CD4-positive, alpha-beta T cell (primary cell): ENCODE measurements at regions of chr3 and their contacts with region 1.

Region 1: DNA sequence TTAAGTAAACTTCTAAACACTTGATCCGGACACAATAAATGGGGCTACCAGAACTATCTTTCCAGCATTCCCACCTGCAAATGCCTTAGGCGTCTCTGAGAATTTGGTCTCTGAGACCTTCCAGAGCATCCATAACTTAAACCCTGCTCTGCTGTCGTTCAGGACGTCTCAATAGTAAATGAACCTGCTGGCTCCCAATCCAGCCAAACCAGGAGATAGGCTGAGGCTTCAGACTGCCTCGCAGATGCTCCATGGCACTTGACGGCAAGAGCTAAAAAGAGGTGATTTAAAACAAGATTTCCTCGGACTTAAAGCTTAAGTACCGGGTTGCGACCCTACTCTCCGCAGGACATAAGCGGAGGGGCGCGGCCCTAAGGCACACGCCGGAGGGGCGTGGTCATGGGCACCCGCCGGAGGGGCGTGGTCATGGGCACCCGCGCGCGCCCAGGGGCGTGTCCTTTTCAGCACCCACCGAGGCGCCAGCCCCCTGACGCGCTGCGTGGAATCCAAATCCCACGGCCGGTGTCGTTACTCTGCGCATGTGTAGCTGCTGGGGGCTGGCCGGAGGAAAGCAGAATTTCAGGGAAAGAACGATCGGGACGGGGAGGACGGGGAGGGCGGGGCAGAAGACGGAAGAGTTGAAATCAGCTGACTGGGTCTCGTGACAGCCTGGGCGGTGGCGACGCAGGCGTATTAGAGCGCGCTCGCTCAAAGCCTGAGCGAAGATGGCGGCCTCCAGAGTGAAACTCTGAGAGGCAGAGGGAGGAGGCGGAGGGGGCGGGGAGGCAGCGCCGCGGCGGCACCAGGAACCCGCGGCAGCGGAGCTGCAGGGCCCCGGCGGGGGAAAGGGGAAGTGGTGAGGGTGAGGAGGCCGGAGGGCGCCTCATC is at the start of gene DNAJC13:
- DNase-seq: peak; percentile 81 to 98 (median 89)
- ATAC-seq: peak; percentile 93
- H3K4me3 ChIP-seq: peak within 1 kb of the TSS; percentile 91
- H3K4me3 Mint-ChIP-seq: peak within 1 kb of the TSS; percentile 97
- H3K27ac ChIP-seq: peak within 1 kb of the TSS; percentile 76 to 81
- H3K27ac Mint-ChIP-seq: peak within 1 kb of the TSS; percentile 91
- H3K4me1 ChIP-seq: peaks cover 12% of the 10 kb centered on the region
- H3K4me1 Mint-ChIP-seq: peaks cover 34% of the 10 kb centered on the region
- H3K27me3 ChIP-seq: no peaks in the 10 kb centered on the region
- H3K27me3 Mint-ChIP-seq: no peaks in the 10 kb centered on the region
- CTCF ChIP-seq: no peak
- total RNA-seq, gene DNAJC13: 13.5 to 14.3 TPM

Region 2: GRCh38 chr3:131026321-131027178 is 1390.5 kb before region 1 on chr3 and contains the starts of genes ASTE1 and NEK11:
- CTCF ChIA-PET with region 1: no interaction called
- POLR2A ChIA-PET with region 1: interaction called, 3 read pairs
- intact Hi-C with region 1: loop called in 1 of 2 experiments (anchors 5 kb)
- DNase-seq: peak; percentile 85 to 96 (median 90)
- ATAC-seq: peak; percentile 97
- H3K4me3 ChIP-seq: peak within 1 kb of the TSS; percentile 66
- H3K4me3 Mint-ChIP-seq: peak within 1 kb of the TSS; percentile 93
- H3K27ac ChIP-seq: peak within 1 kb of the TSS; percentile 84 to 89
- H3K27ac Mint-ChIP-seq: peak within 1 kb of the TSS; percentile 94
- H3K4me1 ChIP-seq: peaks cover 30% of the 10 kb centered on the region
- H3K4me1 Mint-ChIP-seq: peaks cover 52% of the 10 kb centered on the region
- H3K27me3 ChIP-seq: no peaks in the 10 kb centered on the region
- H3K27me3 Mint-ChIP-seq: no peaks in the 10 kb centered on the region
- CTCF ChIP-seq: no peak
- total RNA-seq, gene ASTE1: 25.6 to 26.6 TPM
- total RNA-seq, gene NEK11: 1.6 to 4.2 TPM

Region 3: GRCh38 chr3:131231710-131232389 is 1185.2 kb before region 1 on chr3:
- CTCF ChIA-PET with region 1: no interaction called
- POLR2A ChIA-PET with region 1: no interaction called
- intact Hi-C with region 1: no loop called
- DNase-seq: no peak
- ATAC-seq: no peak
- H3K4me3 ChIP-seq: no peak overlapping the region
- H3K4me3 Mint-ChIP-seq: no peak overlapping the region
- H3K27ac ChIP-seq: no peak overlapping the region
- H3K27ac Mint-ChIP-seq: no peak overlapping the region
- H3K4me1 ChIP-seq: no peaks in the 10 kb centered on the region
- H3K4me1 Mint-ChIP-seq: no peaks in the 10 kb centered on the region
- H3K27me3 ChIP-seq: no peaks in the 10 kb centered on the region
- H3K27me3 Mint-ChIP-seq: no peaks in the 10 kb centered on the region
- CTCF ChIP-seq: no peak

Region 4: DNA sequence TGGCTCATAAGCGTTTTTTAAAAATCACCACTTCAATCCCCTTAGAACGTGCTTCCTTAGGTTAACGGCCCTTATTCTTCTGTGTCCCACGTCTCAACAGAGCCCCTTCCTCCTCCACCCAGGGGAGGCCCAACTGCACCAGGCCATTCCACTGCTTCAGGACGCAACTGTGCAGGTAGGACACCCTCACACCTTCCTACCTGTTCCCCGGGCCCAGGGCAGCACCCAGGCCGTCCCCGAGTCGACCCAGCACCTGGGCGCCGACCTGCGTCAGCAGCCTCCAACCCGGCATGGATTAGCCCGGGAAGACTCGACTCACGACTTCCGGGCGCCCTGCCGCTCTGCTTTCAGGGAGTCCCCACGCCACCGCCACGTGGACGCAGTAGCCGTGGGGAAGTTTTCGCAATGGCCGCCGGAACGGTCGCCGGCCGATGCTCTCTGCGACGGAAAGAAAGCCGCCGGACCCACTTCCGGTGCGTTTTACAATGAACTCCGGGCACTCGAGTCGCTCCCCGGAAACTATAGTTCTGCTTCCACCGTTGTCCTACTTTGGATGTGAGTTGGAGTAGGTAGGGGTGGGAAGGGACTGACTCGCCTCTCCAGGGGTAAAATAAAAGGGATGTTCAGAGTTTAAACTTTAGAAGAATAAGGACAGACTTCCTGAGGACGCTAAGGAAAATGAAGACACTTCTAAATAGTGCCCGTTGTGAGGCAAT is 914.4 kb before region 1 on chr3 and contains the start of gene MRPL3:
- CTCF ChIA-PET with region 1: no interaction called
- POLR2A ChIA-PET with region 1: no interaction called
- intact Hi-C with region 1: loop called in 1 of 2 experiments (anchors 10 kb)
- DNase-seq: peak; percentile 72 to 93 (median 78)
- ATAC-seq: peak; percentile 89
- H3K4me3 ChIP-seq: peak within 1 kb of the TSS; percentile 71
- H3K4me3 Mint-ChIP-seq: peak within 1 kb of the TSS; percentile 98
- H3K27ac ChIP-seq: peak within 1 kb of the TSS; percentile 66 to 76
- H3K27ac Mint-ChIP-seq: peak within 1 kb of the TSS; percentile 93
- H3K4me1 ChIP-seq: peaks cover 16% of the 10 kb centered on the region
- H3K4me1 Mint-ChIP-seq: peaks cover 54% of the 10 kb centered on the region
- H3K27me3 ChIP-seq: no peaks in the 10 kb centered on the region
- H3K27me3 Mint-ChIP-seq: no peaks in the 10 kb centered on the region
- CTCF ChIP-seq: no peak
- total RNA-seq, gene MRPL3: 36.0 to 37.6 TPM

Region 5: DNA sequence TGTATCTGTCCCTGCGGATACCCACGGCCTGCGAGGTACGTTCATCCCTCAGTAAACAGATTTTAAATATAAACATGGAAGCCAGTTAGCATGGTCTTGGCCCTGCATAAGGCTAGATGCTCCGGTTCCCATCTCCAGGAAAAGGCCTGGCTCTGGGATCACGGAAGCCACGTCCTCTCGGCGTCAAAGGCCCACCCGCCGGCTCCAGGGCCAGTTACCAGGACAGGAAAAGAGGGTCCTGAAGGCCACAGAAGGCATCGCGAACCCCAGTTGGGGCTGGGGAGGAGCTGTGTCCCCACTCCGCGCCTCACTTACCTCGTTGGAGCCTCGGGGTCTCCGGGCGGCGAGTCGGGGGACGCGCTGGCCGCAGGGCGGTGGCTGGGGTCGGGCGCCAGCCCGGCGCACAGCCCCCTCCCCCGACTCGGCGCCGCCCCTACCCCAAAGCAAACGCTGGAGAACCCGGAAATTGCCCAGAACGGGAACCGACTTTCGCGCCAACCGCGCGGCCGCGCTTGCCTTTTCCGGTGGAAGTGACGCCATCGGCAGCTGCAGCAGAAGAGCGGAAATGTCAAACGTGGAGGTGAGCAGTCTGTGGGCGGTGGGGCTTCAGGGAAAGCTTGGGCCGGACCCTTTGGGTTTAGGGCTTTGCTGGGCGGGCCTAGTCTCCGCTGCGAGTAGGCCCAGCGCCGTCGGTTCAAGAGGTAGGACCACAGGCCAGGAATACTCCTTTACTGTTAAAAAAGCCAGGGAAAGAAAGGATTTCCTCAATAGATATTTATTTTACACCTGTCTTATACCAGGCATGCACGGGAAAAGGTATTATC is 1244.6 kb after region 1 on chr3 and contains the start of gene TOPBP1:
- CTCF ChIA-PET with region 1: no interaction called
- POLR2A ChIA-PET with region 1: no interaction called
- intact Hi-C with region 1: loop called in 1 of 2 experiments (anchors 10 kb)
- DNase-seq: peak; percentile 70 to 92 (median 81)
- ATAC-seq: peak; percentile 85
- H3K4me3 ChIP-seq: peak within 1 kb of the TSS; percentile 72
- H3K4me3 Mint-ChIP-seq: peak within 1 kb of the TSS; percentile 97
- H3K27ac ChIP-seq: peak within 1 kb of the TSS; percentile 58 to 73
- H3K27ac Mint-ChIP-seq: peak within 1 kb of the TSS; percentile 95
- H3K4me1 ChIP-seq: peaks cover 26% of the 10 kb centered on the region
- H3K4me1 Mint-ChIP-seq: peaks cover 45% of the 10 kb centered on the region
- H3K27me3 ChIP-seq: no peaks in the 10 kb centered on the region
- H3K27me3 Mint-ChIP-seq: no peaks in the 10 kb centered on the region
- CTCF ChIP-seq: no peak
- total RNA-seq, gene TOPBP1: 29.1 to 32.4 TPM